Dendritic cell treated with granulocyte-macrophage colony-stimulating factor and Interleukin-4, amounts not matched to agents 40 ng/mL and 50 ng/mL, for 4 days (primary cell): ENCODE measurements at regions of chr1 and their contacts with region 1.

Region 1: GRCh38 chr1:107963601-107964335 is 1.2 kb downstream of the VAV3 start:
- H3K4me3 Mint-ChIP-seq: peak overlapping the region; percentile 83
- H3K27ac Mint-ChIP-seq: peak overlapping the region; percentile 88
- H3K4me1 Mint-ChIP-seq: peaks cover 36% of the 10 kb centered on the region
- H3K27me3 Mint-ChIP-seq: no peaks in the 10 kb centered on the region

Region 2: GRCh38 chr1:107093385-107093784 is 870.4 kb before region 1 on chr1:
- intact Hi-C with region 1: no loop called
- H3K4me3 Mint-ChIP-seq: no peak overlapping the region
- H3K27ac Mint-ChIP-seq: no peak overlapping the region
- H3K4me1 Mint-ChIP-seq: no peaks in the 10 kb centered on the region
- H3K27me3 Mint-ChIP-seq: no peaks in the 10 kb centered on the region

Region 3: DNA sequence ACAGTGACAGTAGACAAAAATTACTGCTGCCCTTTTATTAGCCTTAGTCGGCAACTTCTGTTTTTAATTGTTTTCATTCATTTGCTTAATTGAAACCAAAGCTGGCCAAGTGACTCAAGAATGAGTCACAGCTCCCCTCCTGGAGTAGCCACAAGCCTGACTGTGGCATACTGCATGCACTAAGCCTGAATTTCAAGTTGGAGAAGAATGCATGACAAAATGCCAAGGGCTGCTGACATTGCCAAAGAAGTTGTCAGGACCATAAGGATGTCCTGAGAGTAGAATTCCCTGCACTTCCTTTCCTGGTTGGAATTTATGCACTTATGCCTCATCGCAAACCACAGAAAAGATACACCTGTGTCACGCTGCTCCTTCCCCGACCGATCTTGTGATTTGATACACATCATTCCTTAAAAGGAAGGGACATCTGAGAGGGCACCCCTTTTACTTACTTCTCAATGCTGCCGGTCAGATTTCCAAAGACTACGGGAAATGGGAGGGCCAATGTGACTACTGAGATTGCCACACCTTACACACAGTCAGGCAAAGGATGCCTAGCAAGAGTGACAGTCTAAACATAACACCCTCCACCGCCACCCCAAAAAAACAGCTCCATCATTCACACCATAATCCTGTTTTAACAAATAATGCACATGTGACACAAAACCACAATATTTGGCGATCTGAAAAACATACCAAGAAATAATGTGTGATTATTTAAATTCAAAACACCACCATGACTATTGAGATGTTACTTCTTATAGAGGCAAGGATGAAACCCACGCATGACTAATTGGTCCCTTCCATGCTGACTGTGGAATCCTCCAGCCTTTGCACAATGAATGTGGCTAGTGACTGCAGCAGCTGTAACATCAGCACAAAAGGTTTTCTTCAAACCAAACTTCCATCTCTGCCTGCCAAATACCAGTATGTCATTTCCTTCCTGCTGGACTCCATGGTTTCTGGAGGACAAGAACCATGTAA is 27.0 kb before region 1 on chr1:
- intact Hi-C with region 1: no loop called
- H3K4me3 Mint-ChIP-seq: no peak overlapping the region
- H3K27ac Mint-ChIP-seq: peak overlapping the region; percentile 39
- H3K4me1 Mint-ChIP-seq: peaks cover 68% of the 10 kb centered on the region
- H3K27me3 Mint-ChIP-seq: no peaks in the 10 kb centered on the region

Region 4: DNA sequence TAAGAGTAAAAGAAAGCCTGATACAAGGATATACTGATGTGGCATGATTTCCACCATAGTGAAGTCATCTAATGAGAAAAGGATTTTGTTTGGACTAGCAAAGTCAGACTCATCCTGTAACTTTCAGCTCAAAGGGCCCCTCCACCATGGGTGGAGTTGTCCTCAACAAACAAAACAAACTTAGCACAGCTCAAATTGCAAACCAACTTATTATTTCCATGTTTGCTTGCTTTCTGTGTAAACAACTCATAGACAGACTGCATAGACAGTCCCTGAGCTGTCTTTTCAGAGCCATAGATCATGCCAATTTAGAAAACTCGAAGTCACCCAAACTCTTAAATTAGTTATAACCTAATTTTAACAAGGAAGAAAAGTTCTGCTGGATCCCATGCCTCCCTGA is 70.6 kb after region 1 on chr1:
- intact Hi-C with region 1: no loop called
- H3K4me3 Mint-ChIP-seq: no peak overlapping the region
- H3K27ac Mint-ChIP-seq: no peak overlapping the region
- H3K4me1 Mint-ChIP-seq: peaks cover 23% of the 10 kb centered on the region
- H3K27me3 Mint-ChIP-seq: no peaks in the 10 kb centered on the region

Region 5: GRCh38 chr1:108049178-108049819 is 85.5 kb after region 1 on chr1:
- intact Hi-C with region 1: loop called (anchors 2 kb)
- H3K4me3 Mint-ChIP-seq: peak overlapping the region; percentile 33
- H3K27ac Mint-ChIP-seq: no peak overlapping the region
- H3K4me1 Mint-ChIP-seq: peaks cover 49% of the 10 kb centered on the region
- H3K27me3 Mint-ChIP-seq: no peaks in the 10 kb centered on the region

Region 6: DNA sequence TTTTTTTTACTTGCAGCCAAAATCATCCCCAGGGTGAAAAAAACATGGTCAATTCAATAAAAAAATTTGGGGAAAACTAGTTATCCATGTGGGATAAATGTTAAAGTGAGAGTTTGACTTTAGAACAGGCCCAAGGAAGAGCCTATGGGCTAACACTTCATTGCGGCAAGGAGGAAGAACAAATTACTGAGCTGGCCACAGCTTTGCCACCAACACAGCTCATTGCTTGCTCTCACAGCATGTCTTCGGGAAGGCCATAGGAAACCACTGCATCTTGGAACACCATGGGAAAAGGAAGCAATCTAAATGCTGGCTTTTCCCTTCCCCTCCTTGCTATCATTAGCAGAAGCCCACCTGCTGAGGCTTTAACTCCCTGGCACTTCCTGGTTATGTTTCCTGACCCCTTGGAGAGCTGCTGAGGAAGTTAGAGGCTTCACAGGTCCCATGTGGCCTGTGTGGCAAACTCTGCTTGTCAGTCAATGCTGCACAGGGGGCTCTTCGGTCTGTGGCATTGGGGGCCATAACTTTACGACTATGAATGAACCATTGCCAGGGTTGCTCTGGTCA is 150.3 kb after region 1 on chr1:
- intact Hi-C with region 1: no loop called
- H3K4me3 Mint-ChIP-seq: no peak overlapping the region
- H3K27ac Mint-ChIP-seq: peak overlapping the region; percentile 65
- H3K4me1 Mint-ChIP-seq: peaks cover 24% of the 10 kb centered on the region
- H3K27me3 Mint-ChIP-seq: no peaks in the 10 kb centered on the region

Region 7: DNA sequence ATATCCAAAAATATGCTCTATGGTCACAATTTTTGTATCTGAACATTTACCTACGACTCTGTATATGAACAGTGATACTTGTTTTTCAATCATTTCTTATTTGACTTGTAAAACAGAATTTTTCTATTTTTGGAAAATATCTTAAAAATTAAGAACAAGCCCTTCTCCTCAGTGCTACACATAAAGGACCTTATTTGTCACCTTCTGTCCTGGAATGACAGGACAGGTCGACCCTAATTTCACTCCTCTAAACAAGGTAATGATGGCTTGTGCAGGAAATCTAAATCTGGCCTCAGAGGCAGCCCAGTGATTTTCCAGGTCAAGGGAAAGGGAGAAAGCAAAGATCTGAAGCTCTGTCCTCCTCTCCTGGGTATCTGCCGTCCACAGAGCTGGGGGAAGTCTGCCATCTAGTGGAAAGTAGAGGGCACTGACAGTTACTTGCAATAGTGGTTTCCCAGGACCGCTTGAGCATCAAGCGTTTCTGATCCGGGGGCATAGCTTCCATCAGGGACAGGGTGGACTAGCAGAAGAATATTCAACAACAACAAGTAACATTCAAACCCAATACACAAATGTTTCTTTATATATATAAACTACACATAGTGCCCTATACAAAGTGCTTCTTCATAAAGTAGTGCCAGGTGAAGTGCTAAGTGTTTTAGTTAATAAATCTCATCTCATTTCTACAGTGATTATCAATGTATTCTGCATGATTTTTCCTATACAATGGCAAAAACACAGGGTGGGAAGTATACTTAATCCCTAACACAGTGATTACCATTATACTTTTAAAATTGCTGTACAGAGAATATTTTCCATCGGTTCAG is 161.8 kb after region 1 on chr1:
- intact Hi-C with region 1: loop called (anchors 10 kb)
- H3K4me3 Mint-ChIP-seq: no peak overlapping the region
- H3K27ac Mint-ChIP-seq: no peak overlapping the region
- H3K4me1 Mint-ChIP-seq: peaks cover 8% of the 10 kb centered on the region
- H3K27me3 Mint-ChIP-seq: no peaks in the 10 kb centered on the region